ENCODE measurements at regions of chr6 and their contacts with region 1.

Region 1: GRCh38 chr6:137878486-137879285 is 11.6 kb downstream of the TNFAIP3 start:
- DNase-seq: peak in 9 of 35 experiments; percentile 17 to 49 (median 39)
- ATAC-seq: peak in 1 of 4 experiments; percentile 7
- H3K4me3 ChIP-seq: no peak overlapping the region
- H3K4me3 Mint-ChIP-seq: peak overlapping the region in 1 of 3 donors; percentile 61
- H3K27ac ChIP-seq: no peak overlapping the region
- H3K27ac Mint-ChIP-seq: peak overlapping the region; percentile 74 to 81
- H3K4me1 ChIP-seq: peaks cover 33 to 59% of the 10 kb centered on the region in 2 experiments
- H3K4me1 Mint-ChIP-seq: peaks cover 86 to 92% (median 89%) of the 10 kb centered on the region in 3 donors
- H3K27me3 ChIP-seq: no peaks in the 10 kb centered on the region
- H3K27me3 Mint-ChIP-seq: no peaks in the 10 kb centered on the region

Region 2: GRCh38 chr6:137717074-137718073 is 161.3 kb before region 1 on chr6:
- CTCF ChIA-PET with region 1: interaction called in 1 of 2 experiments, 3 read pairs
- POLR2A ChIA-PET with region 1: interaction called, 3 to 171 read pairs
- DNase-seq: peak; percentile 25 to 91 (median 81)
- ATAC-seq: peak; percentile 63 to 72 (median 68)
- H3K4me3 ChIP-seq: no peak overlapping the region
- H3K4me3 Mint-ChIP-seq: peak overlapping the region in 1 of 3 donors; percentile 46
- H3K27ac ChIP-seq: peak overlapping the region; percentile 91
- H3K27ac Mint-ChIP-seq: peak overlapping the region; percentile 83 to 95
- H3K4me1 ChIP-seq: peaks cover 20 to 24% of the 10 kb centered on the region in 2 experiments
- H3K4me1 Mint-ChIP-seq: peaks cover 47 to 57% (median 50%) of the 10 kb centered on the region in 3 donors
- H3K27me3 ChIP-seq: no peaks in the 10 kb centered on the region
- H3K27me3 Mint-ChIP-seq: no peaks in the 10 kb centered on the region

Region 3: GRCh38 chr6:137866914-137867684 is 11.6 kb before region 1 on chr6 and contains the start of gene TNFAIP3:
- CTCF ChIA-PET with region 1: interaction called, 3 to 29 read pairs
- POLR2A ChIA-PET with region 1: interaction called, 36 to 204 read pairs
- DNase-seq: peak; percentile 88 to 99 (median 93)
- ATAC-seq: peak; percentile 78 to 86 (median 82)
- H3K4me3 ChIP-seq: peak within 1 kb of the TSS; percentile 90 to 100
- H3K4me3 Mint-ChIP-seq: peak within 1 kb of the TSS; percentile 92 to 98 (median 96)
- H3K27ac ChIP-seq: peak within 1 kb of the TSS; percentile 99
- H3K27ac Mint-ChIP-seq: peak within 1 kb of the TSS; percentile 95 to 98
- H3K4me1 ChIP-seq: peaks cover 30 to 37% of the 10 kb centered on the region in 2 experiments
- H3K4me1 Mint-ChIP-seq: peaks cover 61 to 69% (median 64%) of the 10 kb centered on the region in 3 donors
- H3K27me3 ChIP-seq: no peaks in the 10 kb centered on the region
- H3K27me3 Mint-ChIP-seq: no peaks in the 10 kb centered on the region
- total RNA-seq, gene TNFAIP3: 109 to 2,994 (median 145) TPM

Region 4: GRCh38 chr6:137927777-137928218 is 49.1 kb after region 1 on chr6:
- CTCF ChIA-PET with region 1: interaction called, 6 read pairs
- POLR2A ChIA-PET with region 1: interaction called in 1 of 2 experiments, 13 read pairs
- DNase-seq: peak; percentile 28 to 91 (median 73)
- ATAC-seq: peak; percentile 92 to 100 (median 94)
- H3K4me3 ChIP-seq: peak overlapping the region in 1 of 2 donors; percentile 29
- H3K4me3 Mint-ChIP-seq: peak overlapping the region; percentile 34 to 57 (median 38)
- H3K27ac ChIP-seq: peak overlapping the region; percentile 67
- H3K27ac Mint-ChIP-seq: peak overlapping the region; percentile 66 to 79
- H3K4me1 ChIP-seq: peaks cover 27 to 28% of the 10 kb centered on the region in 2 experiments
- H3K4me1 Mint-ChIP-seq: peaks cover 32 to 41% (median 33%) of the 10 kb centered on the region in 3 donors
- H3K27me3 ChIP-seq: no peaks in the 10 kb centered on the region
- H3K27me3 Mint-ChIP-seq: no peaks in the 10 kb centered on the region

Region 5: GRCh38 chr6:137944793-137945498 is 66.3 kb after region 1 on chr6:
- CTCF ChIA-PET with region 1: interaction called, 3 to 10 read pairs
- POLR2A ChIA-PET with region 1: interaction called, 5 to 7 read pairs
- DNase-seq: peak in 8 of 35 experiments; percentile 6 to 63 (median 14)
- ATAC-seq: peak; percentile 64 to 79 (median 77)
- H3K4me3 ChIP-seq: no peak overlapping the region
- H3K4me3 Mint-ChIP-seq: no peak overlapping the region
- H3K27ac ChIP-seq: no peak overlapping the region
- H3K27ac Mint-ChIP-seq: no peak overlapping the region
- H3K4me1 ChIP-seq: peaks cover under 1 to 8% of the 10 kb centered on the region in 2 experiments
- H3K4me1 Mint-ChIP-seq: peaks cover 18 to 23% (median 19%) of the 10 kb centered on the region in 3 donors
- H3K27me3 ChIP-seq: no peaks in the 10 kb centered on the region
- H3K27me3 Mint-ChIP-seq: no peaks in the 10 kb centered on the region

Region 6: GRCh38 chr6:137975188-137975940 is 96.7 kb after region 1 on chr6:
- CTCF ChIA-PET with region 1: interaction called in 1 of 2 experiments, 14 read pairs
- POLR2A ChIA-PET with region 1: interaction called in 1 of 2 experiments, 12 read pairs
- DNase-seq: peak in 14 of 35 experiments; percentile 6 to 78 (median 20)
- ATAC-seq: peak; percentile 64 to 91 (median 77)
- H3K4me3 ChIP-seq: no peak overlapping the region
- H3K4me3 Mint-ChIP-seq: peak overlapping the region; percentile 67 to 71 (median 67)
- H3K27ac ChIP-seq: peak overlapping the region; percentile 93
- H3K27ac Mint-ChIP-seq: peak overlapping the region; percentile 96 to 97
- H3K4me1 ChIP-seq: peaks cover 19 to 39% of the 10 kb centered on the region in 2 experiments
- H3K4me1 Mint-ChIP-seq: peaks cover 34 to 43% (median 42%) of the 10 kb centered on the region in 3 donors
- H3K27me3 ChIP-seq: no peaks in the 10 kb centered on the region
- H3K27me3 Mint-ChIP-seq: no peaks in the 10 kb centered on the region

Region 7: GRCh38 chr6:138785980-138786379 is 907.3 kb after region 1 on chr6:
- CTCF ChIA-PET with region 1: no interaction called
- POLR2A ChIA-PET with region 1: interaction called in 1 of 2 experiments, 13 read pairs
- DNase-seq: no peak
- ATAC-seq: no peak
- H3K4me3 ChIP-seq: no peak overlapping the region
- H3K4me3 Mint-ChIP-seq: no peak overlapping the region
- H3K27ac ChIP-seq: no peak overlapping the region
- H3K27ac Mint-ChIP-seq: no peak overlapping the region
- H3K4me1 ChIP-seq: no peaks in the 10 kb centered on the region
- H3K4me1 Mint-ChIP-seq: peaks cover 7 to 11% (median 7%) of the 10 kb centered on the region in 3 donors
- H3K27me3 ChIP-seq: no peaks in the 10 kb centered on the region
- H3K27me3 Mint-ChIP-seq: peaks cover 0 to 1% of the 10 kb centered on the region in 2 donors

Measured in T-cell (primary cell).